ENCODE measurements at regions of chr16 and their contacts with region 1.

Region 1: GRCh38 chr16:85986931-85987749 is 88.2 kb downstream of the IRF8 start:
- DNase-seq: peak in 2 of 3 donors; percentile 62 to 68
- ATAC-seq: peak; percentile 76
- H3K4me3 ChIP-seq: no peak overlapping the region
- H3K4me1 ChIP-seq: peaks cover 29% of the 10 kb centered on the region
- CTCF ChIP-seq: no peak

Region 2: GRCh38 chr16:85767569-85767968 is 219.6 kb before region 1 on chr16:
- intact Hi-C with region 1: no loop called
- DNase-seq: no peak
- ATAC-seq: peak; percentile 22
- H3K4me3 ChIP-seq: no peak overlapping the region
- H3K4me1 ChIP-seq: no peaks in the 10 kb centered on the region
- CTCF ChIP-seq: no peak

Region 3: DNA sequence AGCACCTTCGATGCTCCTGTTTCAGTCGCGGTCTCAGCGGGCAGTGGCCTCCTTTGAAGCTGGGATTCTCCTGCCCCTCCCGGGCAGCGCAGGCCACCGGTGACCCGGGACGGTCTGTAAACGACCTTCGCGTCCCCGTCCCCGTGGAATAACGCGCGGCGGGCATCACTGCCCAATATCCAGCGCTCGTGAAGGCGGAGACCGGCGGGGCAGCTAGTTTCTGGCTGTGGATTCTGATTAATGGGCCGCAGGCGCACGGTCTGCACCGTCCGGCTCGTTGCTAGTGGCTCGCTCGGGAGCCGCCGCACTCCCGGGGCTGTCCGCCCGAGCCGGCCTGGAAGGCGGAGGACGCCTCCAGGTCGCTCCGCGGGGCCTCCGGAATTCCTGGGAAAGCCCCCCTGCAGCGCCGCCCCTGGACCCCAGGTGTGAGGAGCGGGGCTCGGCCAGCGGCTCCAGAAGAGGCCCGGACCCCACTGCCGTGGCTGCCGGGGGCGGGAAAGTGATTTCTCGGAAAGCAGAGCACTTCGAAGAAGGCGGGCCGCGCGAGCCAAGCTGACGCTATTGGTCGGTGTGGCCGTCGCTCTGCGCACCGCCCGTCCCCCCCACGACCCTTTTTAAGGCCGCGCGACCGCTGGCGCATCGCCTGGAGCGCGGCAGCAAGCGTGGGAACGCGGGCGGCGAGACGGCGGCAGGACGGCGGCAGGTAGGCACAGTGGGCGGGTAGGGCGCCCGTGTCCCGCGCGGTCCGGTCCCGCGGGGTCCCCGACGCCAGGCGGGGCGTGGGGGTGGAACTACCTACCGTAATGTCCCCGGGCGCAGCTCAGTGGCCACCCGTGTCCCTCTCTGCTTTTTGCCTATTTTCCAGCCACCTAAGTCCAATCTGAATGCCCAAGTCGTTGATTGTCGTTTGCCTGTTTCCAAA is 88.4 kb before region 1 on chr16 and contains the start of gene IRF8:
- intact Hi-C with region 1: loop called in 1 of 2 experiments (anchors 10 kb)
- DNase-seq: peak; percentile 84 to 92 (median 91)
- ATAC-seq: peak; percentile 88
- H3K4me3 ChIP-seq: peak within 1 kb of the TSS; percentile 60
- H3K4me1 ChIP-seq: peaks cover 24% of the 10 kb centered on the region
- CTCF ChIP-seq: no peak
- total RNA-seq, gene IRF8: 28.8 to 55.8 (median 36.5) TPM

Region 4: DNA sequence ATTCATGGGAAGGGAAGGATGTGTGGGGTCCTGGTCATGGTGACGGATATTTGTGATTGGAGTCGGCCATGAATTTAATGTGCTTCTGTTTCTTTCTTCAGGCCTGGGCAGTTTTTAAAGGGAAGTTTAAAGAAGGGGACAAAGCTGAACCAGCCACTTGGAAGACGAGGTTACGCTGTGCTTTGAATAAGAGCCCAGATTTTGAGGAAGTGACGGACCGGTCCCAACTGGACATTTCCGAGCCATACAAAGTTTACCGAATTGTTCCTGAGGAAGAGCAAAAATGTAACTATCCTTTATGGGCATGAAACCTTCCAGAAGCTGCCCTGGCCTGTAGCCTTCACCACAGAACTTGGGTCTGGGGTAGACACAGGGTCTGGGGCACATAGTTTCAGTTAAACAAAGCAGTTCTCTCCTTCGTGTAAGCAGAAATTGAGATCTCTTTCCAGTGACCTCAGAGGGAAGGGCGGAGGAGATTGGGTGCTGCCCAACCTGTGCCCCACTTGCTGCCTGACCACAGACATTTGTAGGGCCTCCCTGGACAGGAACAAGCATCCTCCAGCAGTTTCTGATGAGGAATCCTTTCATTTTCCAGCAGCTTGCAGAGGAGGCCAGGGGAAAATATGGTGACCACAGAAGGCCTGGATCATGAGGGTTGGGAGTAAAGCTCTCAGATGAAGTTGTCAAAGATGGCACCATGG is 78.1 kb before region 1 on chr16:
- intact Hi-C with region 1: no loop called
- DNase-seq: no peak
- ATAC-seq: no peak
- H3K4me3 ChIP-seq: no peak overlapping the region
- H3K4me1 ChIP-seq: no peaks in the 10 kb centered on the region
- CTCF ChIP-seq: no peak

Region 5: DNA sequence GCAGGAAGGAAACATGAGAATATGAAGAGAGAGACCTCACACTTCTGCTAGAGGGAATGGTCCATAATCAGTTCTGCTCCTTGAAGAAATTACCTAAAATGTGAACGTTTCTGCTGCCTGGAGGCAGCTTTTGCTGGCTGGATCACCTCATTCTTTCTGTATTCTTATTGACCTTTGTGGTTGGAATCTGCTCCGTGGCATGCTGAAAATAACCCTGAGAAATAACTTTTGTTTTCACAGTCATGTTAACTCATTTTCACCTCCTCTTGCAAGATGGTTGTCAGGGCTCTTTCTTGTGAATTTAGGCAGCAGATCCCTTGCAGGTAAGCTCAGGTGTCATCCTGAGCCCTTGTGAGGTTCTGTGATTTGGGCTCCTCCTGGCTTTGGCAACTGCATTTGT is 18.0 kb before region 1 on chr16:
- intact Hi-C with region 1: no loop called
- DNase-seq: no peak
- ATAC-seq: no peak
- H3K4me3 ChIP-seq: no peak overlapping the region
- H3K4me1 ChIP-seq: peaks cover 2% of the 10 kb centered on the region
- CTCF ChIP-seq: no peak

Region 6: DNA sequence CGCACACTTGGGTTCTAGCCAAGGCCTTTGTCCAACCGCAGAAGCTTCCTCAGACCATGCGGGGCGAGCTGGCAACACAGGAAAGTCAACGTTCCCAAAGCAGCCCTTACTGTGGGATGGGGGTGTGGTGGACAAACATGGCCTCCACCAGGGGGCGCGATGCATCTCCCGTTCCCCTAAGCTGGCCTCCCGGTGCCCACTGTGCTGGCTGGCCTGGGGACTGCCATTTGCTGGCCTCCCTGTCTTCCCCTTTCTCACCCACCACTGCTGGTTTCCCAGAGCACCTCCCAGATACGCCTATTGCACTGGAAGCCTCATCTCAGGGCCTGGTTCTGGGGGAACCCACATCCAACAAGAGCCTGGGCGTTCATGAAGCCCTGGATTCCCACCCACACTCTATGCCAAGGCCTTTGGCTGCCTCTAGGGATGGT is 57.1 kb after region 1 on chr16:
- intact Hi-C with region 1: no loop called
- DNase-seq: peak in 1 of 3 donors; percentile 51
- ATAC-seq: no peak
- H3K4me3 ChIP-seq: no peak overlapping the region
- H3K4me1 ChIP-seq: no peaks in the 10 kb centered on the region
- CTCF ChIP-seq: no peak